B cell (primary cell): ENCODE measurements at regions of chr22 and their contacts with region 1.

Region 1: DNA sequence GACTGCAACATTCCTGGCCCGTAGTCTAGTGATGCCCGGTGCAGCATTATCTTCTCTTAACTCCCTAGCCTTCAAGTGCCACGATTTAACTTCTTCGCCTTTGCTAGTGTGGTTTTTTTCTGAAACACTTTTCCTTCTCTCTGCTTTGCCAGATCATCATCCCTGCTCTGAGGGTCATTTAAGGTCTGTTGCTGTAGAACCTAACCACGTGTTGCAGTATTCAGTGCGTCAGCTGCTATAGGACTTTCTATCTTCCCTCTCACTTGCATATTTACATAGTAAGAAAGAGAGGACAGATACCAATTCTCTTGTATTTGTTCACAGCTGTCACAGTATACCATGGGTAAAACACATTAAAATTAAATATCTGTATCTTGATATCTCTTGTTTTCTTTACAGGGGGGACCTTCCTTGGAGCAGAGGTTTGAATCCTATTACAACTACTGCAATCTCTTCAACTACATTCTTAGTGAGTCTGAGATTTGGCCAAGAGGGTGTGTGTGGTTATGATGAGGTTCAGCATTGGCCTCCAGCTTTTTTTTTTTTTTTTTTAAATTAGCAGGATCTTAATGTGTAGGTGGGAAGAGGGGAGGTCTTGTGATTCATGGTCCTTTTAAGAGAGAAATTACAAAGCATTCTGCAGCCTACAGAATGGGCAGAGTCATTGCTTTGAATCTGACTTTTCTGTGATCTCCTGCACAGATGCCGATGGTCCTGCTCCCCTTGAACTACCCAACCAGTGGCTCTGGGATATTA is 13.5 kb downstream of the EIF3L start:
- DNase-seq: no peak
- ATAC-seq: no peak
- H3K4me3 ChIP-seq: no peak overlapping the region
- H3K4me3 Mint-ChIP-seq: no peak overlapping the region
- H3K27ac ChIP-seq: no peak overlapping the region
- H3K27ac Mint-ChIP-seq: no peak overlapping the region
- H3K4me1 ChIP-seq: no peaks in the 10 kb centered on the region
- H3K4me1 Mint-ChIP-seq: no peaks in the 10 kb centered on the region
- H3K27me3 ChIP-seq: no peaks in the 10 kb centered on the region
- H3K27me3 Mint-ChIP-seq: no peaks in the 10 kb centered on the region
- CTCF ChIP-seq: no peak

Region 2: DNA sequence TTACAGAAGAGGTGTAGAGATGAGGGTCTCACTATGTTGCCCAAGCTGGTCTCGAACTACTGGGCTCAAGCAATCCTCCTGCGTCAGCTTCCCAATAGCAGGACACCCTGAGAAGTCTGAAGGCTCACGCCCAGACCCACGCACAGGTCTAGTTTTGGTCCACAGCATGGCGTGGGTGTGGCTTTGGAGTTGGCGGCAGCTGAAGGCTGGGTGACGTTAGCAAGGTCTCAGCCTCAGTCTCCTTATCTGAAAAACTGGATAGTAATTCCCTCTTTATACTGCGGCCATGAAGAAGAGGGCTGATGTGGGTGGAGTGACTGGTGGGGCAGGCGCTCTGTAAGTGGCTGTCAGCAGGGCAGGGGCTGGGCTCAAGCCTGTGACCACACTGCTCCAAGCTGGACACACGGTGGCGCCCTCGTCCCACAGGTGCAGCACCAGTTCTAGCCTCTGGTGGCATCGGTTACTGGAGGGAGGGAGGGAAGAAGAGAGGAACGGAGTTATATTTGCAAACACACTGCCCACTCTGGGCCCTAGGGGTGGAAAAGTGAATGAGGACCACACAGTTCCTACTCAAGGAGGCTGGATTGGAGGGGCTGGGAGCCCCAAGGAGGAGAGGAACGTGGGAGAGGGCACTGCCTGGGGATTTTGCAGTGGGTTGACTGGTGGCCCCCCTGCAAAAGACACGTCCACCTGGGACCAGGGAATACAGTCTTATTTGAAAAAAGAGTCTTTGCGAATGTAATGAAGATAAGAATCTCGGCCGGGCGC is 324.0 kb before region 1 on chr22:
- CTCF ChIA-PET with region 1: interaction called, 6 read pairs
- POLR2A ChIA-PET with region 1: no interaction called
- intact Hi-C with region 1: loop called (anchors 2 kb)
- DNase-seq: peak; percentile 90
- ATAC-seq: peak; percentile 100
- H3K4me3 ChIP-seq: no peak overlapping the region
- H3K4me3 Mint-ChIP-seq: peak overlapping the region; percentile 32
- H3K27ac ChIP-seq: no peak overlapping the region
- H3K27ac Mint-ChIP-seq: peak overlapping the region; percentile 21
- H3K4me1 ChIP-seq: peaks cover 20 to 29% of the 10 kb centered on the region in 2 donors
- H3K4me1 Mint-ChIP-seq: peaks cover 24% of the 10 kb centered on the region
- H3K27me3 ChIP-seq: peaks cover 0 to 6% (median under 1%) of the 10 kb centered on the region in 4 experiments
- H3K27me3 Mint-ChIP-seq: peaks cover 22% of the 10 kb centered on the region
- CTCF ChIP-seq: peak; percentile 98

Region 3: DNA sequence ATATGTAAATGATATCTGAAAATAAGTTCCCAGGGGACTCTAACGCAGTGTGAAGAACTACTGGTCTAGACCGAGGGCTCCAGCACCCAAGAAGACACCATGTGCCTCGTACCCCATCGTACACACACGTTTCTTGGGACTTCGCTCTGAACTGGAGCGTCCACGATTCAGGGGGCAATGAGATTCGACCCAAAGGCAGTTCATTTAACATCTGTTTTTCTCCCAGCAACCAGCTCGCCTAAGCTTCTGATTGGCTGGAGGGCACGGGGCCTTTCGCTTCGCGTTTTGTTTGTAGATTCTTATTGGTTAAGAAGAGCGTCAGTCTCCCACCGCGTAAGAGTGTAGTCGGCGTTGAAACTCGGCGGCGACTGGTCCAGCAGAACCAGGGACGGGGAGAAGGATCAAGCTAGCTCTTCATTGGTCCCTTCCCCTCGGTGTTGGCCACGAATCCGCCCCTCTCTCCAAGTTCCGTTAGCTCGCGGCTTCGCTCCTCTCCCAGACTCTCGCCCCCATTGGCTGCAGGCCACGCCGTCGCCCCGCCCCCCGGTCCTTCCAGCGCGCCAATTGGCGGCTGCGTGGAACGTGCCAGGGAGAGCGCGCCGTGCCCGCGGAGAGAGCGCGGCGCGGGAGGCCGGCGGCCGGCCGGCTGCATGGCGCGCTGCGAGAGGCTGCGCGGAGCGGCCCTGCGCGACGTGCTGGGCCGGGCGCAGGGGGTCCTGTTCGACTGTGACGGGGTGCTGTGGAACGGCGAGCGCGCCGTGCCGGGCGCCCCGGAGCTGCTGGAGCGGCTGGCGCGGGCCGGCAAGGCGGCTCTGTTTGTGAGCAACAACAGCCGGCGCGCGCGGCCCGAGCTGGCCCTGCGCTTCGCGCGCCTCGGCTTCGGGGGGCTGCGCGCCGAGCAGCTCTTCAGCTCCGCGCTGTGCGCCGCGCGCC is 204.3 kb before region 1 on chr22 and contains the start of gene PDXP:
- CTCF ChIA-PET with region 1: interaction called, 33 read pairs
- POLR2A ChIA-PET with region 1: interaction called, 4 read pairs
- intact Hi-C with region 1: no loop called
- DNase-seq: peak; percentile 99
- ATAC-seq: peak; percentile 88
- H3K4me3 ChIP-seq: peak within 1 kb of the TSS; percentile 49 to 74 (median 64)
- H3K4me3 Mint-ChIP-seq: peak within 1 kb of the TSS; percentile 98
- H3K27ac ChIP-seq: peak within 1 kb of the TSS; percentile 72 to 84
- H3K27ac Mint-ChIP-seq: peak within 1 kb of the TSS; percentile 99
- H3K4me1 ChIP-seq: peaks cover 38 to 46% of the 10 kb centered on the region in 2 donors
- H3K4me1 Mint-ChIP-seq: peaks cover 47% of the 10 kb centered on the region
- H3K27me3 ChIP-seq: no peaks in the 10 kb centered on the region
- H3K27me3 Mint-ChIP-seq: no peaks in the 10 kb centered on the region
- CTCF ChIP-seq: no peak
- total RNA-seq, gene PDXP: 16.6 and 16.9 TPM in 2 replicates

Region 4: DNA sequence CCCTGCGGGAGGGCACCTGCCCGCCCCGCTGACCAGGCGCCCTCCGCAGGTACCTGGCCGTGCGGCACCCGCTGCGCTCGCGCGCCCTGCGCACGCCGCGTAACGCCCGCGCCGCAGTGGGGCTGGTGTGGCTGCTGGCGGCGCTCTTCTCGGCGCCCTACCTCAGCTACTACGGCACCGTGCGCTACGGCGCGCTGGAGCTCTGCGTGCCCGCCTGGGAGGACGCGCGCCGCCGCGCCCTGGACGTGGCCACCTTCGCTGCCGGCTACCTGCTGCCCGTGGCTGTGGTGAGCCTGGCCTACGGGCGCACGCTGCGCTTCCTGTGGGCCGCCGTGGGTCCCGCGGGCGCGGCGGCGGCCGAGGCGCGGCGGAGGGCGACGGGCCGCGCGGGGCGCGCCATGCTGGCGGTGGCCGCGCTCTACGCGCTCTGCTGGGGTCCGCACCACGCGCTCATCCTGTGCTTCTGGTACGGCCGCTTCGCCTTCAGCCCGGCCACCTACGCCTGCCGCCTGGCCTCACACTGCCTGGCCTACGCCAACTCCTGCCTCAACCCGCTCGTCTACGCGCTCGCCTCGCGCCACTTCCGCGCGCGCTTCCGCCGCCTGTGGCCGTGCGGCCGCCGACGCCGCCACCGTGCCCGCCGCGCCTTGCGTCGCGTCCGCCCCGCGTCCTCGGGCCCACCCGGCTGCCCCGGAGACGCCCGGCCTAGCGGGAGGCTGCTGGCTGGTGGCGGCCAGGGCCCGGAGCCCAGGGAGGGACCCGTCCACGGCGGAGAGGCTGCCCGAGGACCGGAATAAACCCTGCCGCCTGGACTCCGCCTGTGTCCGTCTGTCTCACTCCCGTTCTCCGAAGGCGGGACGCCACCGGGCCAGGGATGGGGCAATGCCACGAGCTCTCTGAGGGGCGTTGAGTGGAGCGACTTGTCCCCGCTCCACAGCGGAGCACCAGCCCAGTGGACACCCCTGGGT is 37.8 kb before region 1 on chr22:
- CTCF ChIA-PET with region 1: interaction called, 177 read pairs
- POLR2A ChIA-PET with region 1: no interaction called
- intact Hi-C with region 1: no loop called
- DNase-seq: peak; percentile 45
- ATAC-seq: no peak
- H3K4me3 ChIP-seq: peak overlapping the region in 1 of 5 experiments; percentile 15
- H3K4me3 Mint-ChIP-seq: peak overlapping the region; percentile 72
- H3K27ac ChIP-seq: no peak overlapping the region
- H3K27ac Mint-ChIP-seq: no peak overlapping the region
- H3K4me1 ChIP-seq: peaks cover 0 to 2% of the 10 kb centered on the region in 2 donors
- H3K4me1 Mint-ChIP-seq: peaks cover 6% of the 10 kb centered on the region
- H3K27me3 ChIP-seq: peaks cover 0 to 22% (median 7%) of the 10 kb centered on the region in 4 experiments
- H3K27me3 Mint-ChIP-seq: peaks cover 24% of the 10 kb centered on the region
- CTCF ChIP-seq: no peak

Region 5: DNA sequence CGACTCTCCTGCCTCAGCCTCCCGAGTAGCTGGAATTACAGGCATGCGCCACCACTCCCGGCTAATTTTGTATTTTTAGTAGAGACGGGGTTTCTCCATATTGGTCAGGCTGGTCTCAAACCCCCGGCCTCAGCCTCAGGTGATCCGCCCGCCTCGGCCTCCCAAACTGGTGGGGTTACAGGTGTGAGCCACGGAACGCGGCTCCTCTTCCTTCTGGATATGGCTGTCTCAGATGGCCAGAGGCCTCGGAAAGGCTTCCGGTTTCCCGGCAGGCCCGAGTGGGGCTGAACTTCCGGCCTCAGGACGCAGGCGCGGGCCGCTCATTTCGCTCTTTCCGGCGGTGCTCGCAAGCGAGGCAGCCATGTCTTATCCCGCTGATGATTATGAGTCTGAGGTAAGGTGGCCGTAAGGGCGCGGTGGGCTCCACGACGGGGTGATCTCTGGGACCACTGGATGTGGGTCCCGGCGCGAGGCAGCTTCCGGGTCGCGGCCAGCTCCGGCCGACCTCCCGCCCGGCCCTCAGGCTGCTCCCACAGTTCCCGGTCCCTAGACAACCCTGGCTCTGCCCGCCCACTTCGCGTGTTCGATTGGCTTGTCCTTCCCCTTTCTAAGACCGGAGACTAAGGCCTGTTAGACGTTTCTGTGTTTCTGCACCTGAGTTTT is 13.5 kb before region 1 on chr22 and contains the start of gene EIF3L:
- CTCF ChIA-PET with region 1: interaction called, 27 read pairs
- POLR2A ChIA-PET with region 1: no interaction called
- intact Hi-C with region 1: loop called (anchors 2 kb)
- DNase-seq: peak; percentile 92
- ATAC-seq: peak; percentile 68
- H3K4me3 ChIP-seq: peak within 1 kb of the TSS; percentile 62 to 98 (median 90)
- H3K4me3 Mint-ChIP-seq: peak within 1 kb of the TSS; percentile 91
- H3K27ac ChIP-seq: peak within 1 kb of the TSS; percentile 81 to 90
- H3K27ac Mint-ChIP-seq: peak within 1 kb of the TSS; percentile 99
- H3K4me1 ChIP-seq: peaks cover 22 to 30% of the 10 kb centered on the region in 2 donors
- H3K4me1 Mint-ChIP-seq: peaks cover 43% of the 10 kb centered on the region
- H3K27me3 ChIP-seq: no peaks in the 10 kb centered on the region
- H3K27me3 Mint-ChIP-seq: no peaks in the 10 kb centered on the region
- CTCF ChIP-seq: no peak
- total RNA-seq, gene EIF3L: 526 and 560 TPM in 2 replicates

Region 6: DNA sequence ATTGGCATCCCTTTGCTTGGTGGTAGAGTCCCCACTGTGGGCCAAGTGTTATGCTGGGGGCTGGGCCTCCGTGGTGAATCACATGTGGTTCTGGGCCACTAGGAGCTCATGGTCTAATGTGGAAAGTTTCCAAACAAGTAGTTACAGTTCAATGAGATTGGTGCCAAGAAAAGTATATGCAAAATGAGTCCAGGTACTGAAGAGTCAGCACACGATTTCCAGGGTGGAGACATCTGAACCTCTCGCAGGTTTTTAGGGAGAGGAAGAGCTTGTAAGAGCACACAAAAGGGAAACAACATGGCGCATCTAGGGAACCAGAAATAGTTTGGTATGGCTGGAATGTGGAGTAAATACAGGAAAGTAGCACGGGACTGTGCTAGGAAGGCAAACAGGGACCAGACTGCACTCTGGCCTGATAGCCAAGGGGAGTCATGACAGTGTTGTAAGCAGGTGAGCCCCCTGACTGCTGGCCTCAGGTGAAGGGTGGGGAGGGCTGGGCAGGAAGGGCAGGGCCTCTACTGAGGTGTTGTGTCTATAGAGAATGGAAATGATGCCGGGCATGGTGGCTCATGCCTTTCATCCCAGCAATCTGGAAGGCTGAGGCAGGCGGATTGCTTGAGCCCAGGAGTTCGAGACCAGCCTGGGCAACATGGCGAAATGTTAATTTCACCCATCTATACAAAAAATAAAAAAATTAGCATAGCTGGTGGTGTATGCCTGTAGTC is 103.4 kb after region 1 on chr22:
- CTCF ChIA-PET with region 1: interaction called, 10 read pairs
- POLR2A ChIA-PET with region 1: no interaction called
- intact Hi-C with region 1: no loop called
- DNase-seq: no peak
- ATAC-seq: no peak
- H3K4me3 ChIP-seq: no peak overlapping the region
- H3K4me3 Mint-ChIP-seq: no peak overlapping the region
- H3K27ac ChIP-seq: no peak overlapping the region
- H3K27ac Mint-ChIP-seq: no peak overlapping the region
- H3K4me1 ChIP-seq: no peaks in the 10 kb centered on the region
- H3K4me1 Mint-ChIP-seq: peaks cover 4% of the 10 kb centered on the region
- H3K27me3 ChIP-seq: no peaks in the 10 kb centered on the region
- H3K27me3 Mint-ChIP-seq: no peaks in the 10 kb centered on the region
- CTCF ChIP-seq: no peak